Motor neuron (in vitro differentiated cells): ENCODE measurements at regions of chr1 and their contacts with region 1.

Region 1: DNA sequence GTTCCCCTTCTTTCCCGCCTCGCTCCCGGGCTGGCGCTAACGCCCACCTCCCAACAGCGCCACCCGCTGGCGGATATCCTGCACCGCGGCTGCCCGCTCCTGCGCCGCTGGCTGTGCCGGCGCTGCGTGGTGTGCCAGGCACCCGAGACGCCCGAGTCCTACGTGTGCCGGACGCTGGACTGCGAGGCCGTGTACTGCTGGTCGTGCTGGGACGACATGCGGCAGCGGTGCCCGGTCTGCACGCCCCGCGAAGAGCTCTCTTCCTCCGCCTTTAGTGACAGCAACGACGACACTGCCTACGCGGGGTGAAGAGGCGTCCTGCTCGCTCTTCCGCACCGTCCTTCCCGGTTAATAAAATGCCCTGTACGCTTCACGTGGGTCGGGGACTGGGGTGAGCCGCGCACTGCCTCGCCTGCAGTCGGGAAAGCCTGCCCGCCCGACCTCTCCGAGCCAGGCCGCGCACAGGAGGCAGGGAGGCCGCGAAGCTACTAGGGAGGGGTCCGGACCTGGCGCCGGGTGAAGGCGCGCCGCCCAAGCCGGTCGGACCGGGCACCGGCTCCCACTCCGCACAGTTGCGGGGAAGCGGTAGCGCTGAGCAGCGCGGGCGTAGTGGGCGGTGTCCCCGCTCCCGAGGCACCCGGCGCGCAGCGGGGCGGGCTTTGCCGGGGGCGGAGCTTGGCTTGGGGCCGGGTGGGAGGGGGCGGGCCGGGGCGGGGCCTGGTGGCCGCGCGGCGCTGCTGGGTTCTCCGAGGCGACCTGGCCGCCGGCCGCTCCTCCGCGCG is at the start of gene ADAM15:
- ATAC-seq: peak; percentile 70 to 85 (median 81)
- H3K4me3 ChIP-seq: peak within 1 kb of the TSS; percentile 51 to 66 (median 64)
- H3K27ac ChIP-seq: peak within 1 kb of the TSS; percentile 47 to 56
- H3K4me1 ChIP-seq: peaks cover 20 to 21% of the 10 kb centered on the region in 2 donors
- total RNA-seq, gene ADAM15: 15.7 to 76.9 (median 28.1) TPM

Region 2: GRCh38 chr1:154479764-154480421 is 570.9 kb before region 1 on chr1:
- in situ Hi-C with region 1: loop called in 1 of 9 experiments (anchors 25 kb)
- ATAC-seq: peak; percentile 92 to 100 (median 99)
- H3K4me3 ChIP-seq: no peak overlapping the region
- H3K27ac ChIP-seq: no peak overlapping the region
- H3K4me1 ChIP-seq: peaks cover 3 to 8% of the 10 kb centered on the region in 2 donors

Region 3: DNA sequence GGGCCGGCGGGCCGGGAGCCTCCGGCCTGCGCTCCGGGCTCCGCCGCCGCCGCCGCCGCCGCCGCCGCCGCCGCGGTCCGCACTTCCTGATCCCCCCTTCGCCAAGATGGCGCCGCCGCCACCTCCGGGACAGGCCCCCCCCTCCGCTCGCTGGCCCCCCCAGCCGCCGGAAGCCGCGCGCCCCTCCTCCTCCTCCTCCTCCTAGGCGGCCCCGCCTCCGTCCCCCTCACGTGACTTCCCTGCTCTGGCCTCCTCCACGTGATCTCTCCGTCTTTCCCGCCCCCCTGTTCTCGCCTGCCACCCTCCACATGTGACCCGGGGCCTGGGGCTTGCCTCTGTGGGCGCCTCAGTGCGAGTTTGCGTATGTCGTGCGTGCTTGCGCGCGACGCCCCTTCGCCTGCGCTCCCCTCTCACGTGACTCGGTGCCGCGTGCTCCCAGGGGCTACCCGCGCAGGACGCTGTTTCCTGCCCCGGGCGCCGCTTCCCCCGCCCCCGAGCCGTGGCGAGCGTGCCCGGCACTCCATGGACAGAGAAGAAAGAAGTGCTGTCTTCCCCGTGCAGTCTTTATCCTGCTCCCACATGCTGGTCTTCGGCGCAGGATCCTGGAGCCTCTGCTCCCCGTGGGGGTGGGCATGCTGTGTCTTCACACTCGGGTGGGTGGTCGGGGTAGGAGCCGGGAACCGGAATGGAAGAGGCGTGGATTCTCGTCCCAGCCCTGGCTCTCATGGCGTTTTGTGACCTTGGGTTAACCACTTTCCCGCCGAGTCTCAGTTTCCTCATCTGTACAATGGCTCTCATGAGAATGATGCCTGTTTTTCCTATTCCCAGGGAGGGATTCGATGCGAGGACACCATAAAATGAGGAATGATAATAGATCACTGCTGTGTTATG is 491.9 kb before region 1 on chr1 and contains the start of gene UBE2Q1:
- in situ Hi-C with region 1: loop called in 3 of 9 experiments (anchors 25 kb)
- ATAC-seq: peak; percentile 84 to 93 (median 91)
- H3K4me3 ChIP-seq: peak within 1 kb of the TSS; percentile 51 to 83 (median 77)
- H3K27ac ChIP-seq: peak within 1 kb of the TSS; percentile 87 to 90
- H3K4me1 ChIP-seq: peaks cover 13 to 14% of the 10 kb centered on the region in 2 donors
- total RNA-seq, gene UBE2Q1: 32.0 to 58.2 (median 39.2) TPM

Region 4: DNA sequence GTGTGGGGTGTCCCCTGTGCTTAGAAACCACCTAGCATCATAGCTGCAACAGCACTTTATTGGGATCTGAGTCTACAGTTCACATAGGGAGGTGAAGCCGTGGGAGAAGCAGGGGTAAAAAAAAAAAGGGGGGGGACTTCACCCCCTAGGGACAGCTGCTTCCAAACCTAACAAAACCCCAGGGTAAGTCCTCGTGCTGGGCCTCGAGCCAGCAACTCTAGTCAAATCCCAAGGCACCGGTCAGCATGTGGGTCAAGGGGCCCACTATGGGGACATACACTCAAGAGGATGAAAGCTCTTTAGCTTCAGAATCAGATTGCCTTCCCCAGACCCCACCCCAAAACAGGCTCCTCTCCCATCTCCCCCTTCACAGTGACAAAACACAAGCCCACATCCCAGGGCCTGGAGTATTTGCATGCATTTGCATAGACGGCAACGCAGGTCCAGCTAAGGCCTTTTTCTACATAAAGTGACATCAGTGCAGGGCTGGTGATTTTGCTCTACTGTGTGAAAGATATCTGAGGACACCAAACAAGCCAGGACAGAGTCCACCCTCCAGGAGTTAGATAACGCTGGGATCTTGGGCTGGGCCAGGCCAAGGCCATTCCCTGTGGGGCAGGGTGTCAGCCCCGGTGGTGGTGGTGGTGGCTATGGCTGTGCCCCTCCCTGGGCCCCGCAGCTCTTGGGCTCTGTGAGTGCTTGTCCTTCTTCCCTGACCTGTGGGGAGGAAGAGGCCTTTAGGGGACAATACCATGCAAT is 106.2 kb before region 1 on chr1:
- in situ Hi-C with region 1: no loop called
- ATAC-seq: peak in 6 of 8 experiments; percentile 6 to 81 (median 58)
- H3K4me3 ChIP-seq: no peak overlapping the region
- H3K27ac ChIP-seq: peak overlapping the region in 1 of 2 donors; percentile 12
- H3K4me1 ChIP-seq: peaks cover 40% of the 10 kb centered on the region in 2 donors

Region 5: GRCh38 chr1:154974063-154974807 is 76.5 kb before region 1 on chr1 and contains the start of gene CKS1B:
- in situ Hi-C with region 1: loop called in 2 of 9 experiments (anchors 25 kb)
- ATAC-seq: peak; percentile 44 to 82 (median 78)
- H3K4me3 ChIP-seq: peak within 1 kb of the TSS; percentile 53 to 82 (median 62)
- H3K27ac ChIP-seq: peak within 1 kb of the TSS; percentile 90 to 94
- H3K4me1 ChIP-seq: peaks cover 28 to 29% of the 10 kb centered on the region in 2 donors
- total RNA-seq, gene CKS1B: 21.6 to 257 (median 42.5) TPM

Region 6: GRCh38 chr1:156042828-156043227 is 992.1 kb after region 1 on chr1:
- in situ Hi-C with region 1: no loop called
- ATAC-seq: no peak
- H3K4me3 ChIP-seq: no peak overlapping the region
- H3K27ac ChIP-seq: no peak overlapping the region
- H3K4me1 ChIP-seq: no peaks in the 10 kb centered on the region